B cell (primary cell): ENCODE measurements at regions of chrX and their contacts with region 1.

Region 1: GRCh38 chrX:13051529-13052172 is 7.2 kb upstream of the FAM9C start:
- DNase-seq: peak; percentile 69
- ATAC-seq: peak; percentile 76
- H3K4me3 ChIP-seq: no peak overlapping the region
- H3K4me3 Mint-ChIP-seq: peak overlapping the region; percentile 45
- H3K27ac ChIP-seq: peak overlapping the region; percentile 79 to 85
- H3K27ac Mint-ChIP-seq: peak overlapping the region; percentile 93
- H3K4me1 ChIP-seq: peaks cover 35 to 42% of the 10 kb centered on the region in 2 donors
- H3K4me1 Mint-ChIP-seq: peaks cover 51% of the 10 kb centered on the region
- H3K27me3 ChIP-seq: no peaks in the 10 kb centered on the region
- H3K27me3 Mint-ChIP-seq: no peaks in the 10 kb centered on the region
- CTCF ChIP-seq: no peak

Region 2: DNA sequence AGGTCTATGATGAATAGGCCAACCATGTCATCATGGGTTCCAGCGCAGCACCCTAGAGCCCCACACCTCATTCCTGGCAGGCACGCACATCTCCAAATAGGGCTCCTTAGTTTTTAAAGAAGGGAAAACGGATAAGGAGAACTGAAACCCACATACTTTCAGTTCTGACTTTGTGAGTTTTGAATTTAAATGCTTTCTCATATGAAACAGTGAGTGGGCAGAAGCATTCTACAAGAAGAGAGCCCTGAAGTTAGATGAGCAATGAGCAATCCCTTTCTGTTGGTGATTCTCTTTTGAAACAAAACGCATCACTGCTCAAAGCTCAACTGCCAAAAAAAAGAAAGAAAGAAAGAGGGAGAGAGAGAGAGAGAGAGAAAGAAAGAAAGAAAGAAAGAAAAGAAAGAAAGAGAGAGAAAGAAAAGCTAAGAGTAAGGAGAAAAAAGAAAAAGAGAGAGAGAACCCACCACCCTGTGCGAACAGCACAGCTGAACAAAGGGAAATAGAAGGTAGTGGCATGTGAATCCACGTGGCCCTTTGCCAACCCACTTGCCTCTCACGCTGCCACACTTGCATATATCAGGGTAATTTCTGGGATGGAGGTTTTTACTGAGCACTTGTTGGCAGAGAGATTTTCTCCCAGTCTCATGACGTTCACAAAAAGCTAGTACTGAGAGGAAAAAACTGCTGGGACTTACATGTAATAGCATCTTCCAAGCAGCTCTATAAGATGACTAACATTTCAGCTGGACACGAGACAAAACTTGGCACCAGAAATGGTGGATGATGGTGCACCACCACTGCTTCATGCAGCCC is 45.8 kb before region 1 on chrX:
- CTCF ChIA-PET with region 1: no interaction called
- POLR2A ChIA-PET with region 1: no interaction called
- intact Hi-C with region 1: loop called (anchors 1 kb)
- DNase-seq: peak; percentile 59
- ATAC-seq: peak; percentile 66
- H3K4me3 ChIP-seq: peak overlapping the region in 2 of 5 experiments; percentile 1 to 36
- H3K4me3 Mint-ChIP-seq: peak overlapping the region; percentile 82
- H3K27ac ChIP-seq: peak overlapping the region; percentile 51 to 52
- H3K27ac Mint-ChIP-seq: peak overlapping the region; percentile 89
- H3K4me1 ChIP-seq: peaks cover 82 to 85% of the 10 kb centered on the region in 2 donors
- H3K4me1 Mint-ChIP-seq: peaks cover 77% of the 10 kb centered on the region
- H3K27me3 ChIP-seq: peaks cover 0 to 5% (median 0%) of the 10 kb centered on the region in 4 experiments
- H3K27me3 Mint-ChIP-seq: no peaks in the 10 kb centered on the region
- CTCF ChIP-seq: no peak

Region 3: DNA sequence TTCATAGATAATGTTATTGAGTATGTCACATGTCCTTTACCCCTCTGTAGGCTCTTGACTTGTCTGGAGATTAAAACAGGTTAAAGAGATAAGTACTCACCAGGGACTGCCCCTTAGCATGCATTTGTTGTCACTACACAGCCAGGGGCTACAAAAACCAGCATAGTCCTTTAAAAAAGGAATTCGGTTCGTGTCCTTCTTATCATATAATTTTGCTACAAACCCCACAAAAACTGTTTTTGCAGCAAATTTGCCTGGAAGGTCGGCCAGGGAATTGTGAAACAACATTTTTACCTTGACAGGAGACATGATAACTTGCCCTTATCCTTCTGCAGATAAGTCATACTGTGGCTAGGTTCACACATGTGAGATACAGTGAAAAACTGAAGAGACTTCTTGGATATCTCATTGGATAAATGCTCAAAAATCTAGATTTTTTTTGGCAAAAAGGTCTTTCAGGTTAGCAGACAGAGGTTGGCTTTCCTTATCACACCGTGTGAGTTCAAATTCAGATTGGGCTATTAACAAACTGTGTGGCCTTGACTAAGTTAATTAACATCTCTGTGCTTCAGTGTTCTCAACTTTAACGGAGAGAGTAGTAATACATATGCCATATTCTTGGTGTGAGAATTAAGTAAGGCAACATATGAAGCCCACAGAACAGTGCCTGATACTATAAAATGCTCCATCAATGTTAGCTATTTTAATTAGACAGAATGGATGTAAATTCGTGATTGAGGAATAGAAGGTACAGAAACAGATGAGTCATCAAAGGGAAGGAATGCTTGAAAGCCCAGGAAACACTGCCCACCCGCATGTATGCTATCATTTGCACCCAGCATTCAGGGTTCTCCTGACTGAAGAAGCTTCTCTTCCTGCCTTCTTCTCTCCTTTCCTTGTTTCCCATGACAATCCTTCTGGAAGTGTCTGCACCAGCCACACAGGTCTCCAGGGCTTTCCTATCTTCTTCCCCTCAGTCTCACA is 37.2 kb before region 1 on chrX:
- CTCF ChIA-PET with region 1: no interaction called
- POLR2A ChIA-PET with region 1: no interaction called
- intact Hi-C with region 1: loop called (anchors 5 kb)
- DNase-seq: no peak
- ATAC-seq: no peak
- H3K4me3 ChIP-seq: peak overlapping the region in 1 of 5 experiments; percentile 42
- H3K4me3 Mint-ChIP-seq: peak overlapping the region; percentile 42
- H3K27ac ChIP-seq: peak overlapping the region; percentile 61 to 68
- H3K27ac Mint-ChIP-seq: peak overlapping the region; percentile 82
- H3K4me1 ChIP-seq: peaks cover 47 to 56% of the 10 kb centered on the region in 2 donors
- H3K4me1 Mint-ChIP-seq: peaks cover 57% of the 10 kb centered on the region
- H3K27me3 ChIP-seq: peaks cover 0 to 5% (median 0%) of the 10 kb centered on the region in 4 experiments
- H3K27me3 Mint-ChIP-seq: no peaks in the 10 kb centered on the region
- CTCF ChIP-seq: no peak

Region 4: GRCh38 chrX:13506574-13506973 is 454.9 kb after region 1 on chrX:
- CTCF ChIA-PET with region 1: no interaction called
- POLR2A ChIA-PET with region 1: no interaction called
- intact Hi-C with region 1: no loop called
- DNase-seq: peak; percentile 58
- ATAC-seq: no peak
- H3K4me3 ChIP-seq: no peak overlapping the region
- H3K4me3 Mint-ChIP-seq: no peak overlapping the region
- H3K27ac ChIP-seq: no peak overlapping the region
- H3K27ac Mint-ChIP-seq: no peak overlapping the region
- H3K4me1 ChIP-seq: no peaks in the 10 kb centered on the region
- H3K4me1 Mint-ChIP-seq: no peaks in the 10 kb centered on the region
- H3K27me3 ChIP-seq: no peaks in the 10 kb centered on the region
- H3K27me3 Mint-ChIP-seq: no peaks in the 10 kb centered on the region
- CTCF ChIP-seq: peak; percentile 79